ENCODE measurements at regions of chr14 and their contacts with region 1.

Region 1: GRCh38 chr14:91324606-91325575 is 80.4 kb upstream of the GPR68 start:
- DNase-seq: no peak
- H3K4me3 ChIP-seq: no peak overlapping the region
- CTCF ChIP-seq: no peak

Region 2: GRCh38 chr14:91286530-91286937 is 38.4 kb before region 1 on chr14:
- in situ Hi-C with region 1: no loop called
- DNase-seq: peak; percentile 71
- H3K4me3 ChIP-seq: no peak overlapping the region
- CTCF ChIP-seq: peak; percentile 84

Region 3: DNA sequence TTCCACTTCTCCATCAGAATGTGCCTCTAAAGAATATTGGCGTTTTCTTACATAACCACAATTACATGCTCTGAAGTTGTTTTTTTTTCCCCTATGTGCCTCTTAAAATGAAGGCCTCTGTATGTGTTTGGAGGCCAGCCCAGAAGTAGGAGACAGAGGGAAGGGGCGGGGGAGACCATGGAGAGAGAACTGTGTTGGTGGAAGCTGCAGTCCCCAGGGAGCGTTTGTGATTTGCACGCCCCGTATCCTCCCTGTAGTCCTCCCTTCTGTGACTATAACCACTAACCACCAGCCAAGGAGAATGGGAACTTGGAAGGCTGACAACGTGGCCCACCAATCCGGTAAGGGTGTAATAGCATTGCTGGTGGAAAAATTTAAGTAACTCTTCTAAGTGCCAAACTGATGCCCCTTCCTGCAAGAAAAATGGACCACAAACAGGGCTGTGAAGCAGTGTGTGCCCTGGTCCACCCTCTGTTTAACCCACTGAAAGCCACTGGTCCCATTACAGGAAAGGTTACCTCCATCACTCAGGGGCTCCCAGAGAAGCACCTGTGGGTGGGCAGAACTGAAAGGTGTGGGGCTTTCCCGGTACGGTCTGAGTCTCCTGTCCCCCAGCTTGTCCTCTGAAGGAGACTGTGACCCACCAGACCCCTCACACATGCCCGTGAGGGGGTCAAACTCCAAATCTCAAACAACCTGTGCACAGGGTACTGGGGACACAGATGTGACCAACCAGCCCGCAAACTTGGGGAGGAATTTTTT is 55.9 kb after region 1 on chr14:
- in situ Hi-C with region 1: no loop called
- DNase-seq: peak; percentile 72
- H3K4me3 ChIP-seq: no peak overlapping the region
- CTCF ChIP-seq: no peak

Region 4: DNA sequence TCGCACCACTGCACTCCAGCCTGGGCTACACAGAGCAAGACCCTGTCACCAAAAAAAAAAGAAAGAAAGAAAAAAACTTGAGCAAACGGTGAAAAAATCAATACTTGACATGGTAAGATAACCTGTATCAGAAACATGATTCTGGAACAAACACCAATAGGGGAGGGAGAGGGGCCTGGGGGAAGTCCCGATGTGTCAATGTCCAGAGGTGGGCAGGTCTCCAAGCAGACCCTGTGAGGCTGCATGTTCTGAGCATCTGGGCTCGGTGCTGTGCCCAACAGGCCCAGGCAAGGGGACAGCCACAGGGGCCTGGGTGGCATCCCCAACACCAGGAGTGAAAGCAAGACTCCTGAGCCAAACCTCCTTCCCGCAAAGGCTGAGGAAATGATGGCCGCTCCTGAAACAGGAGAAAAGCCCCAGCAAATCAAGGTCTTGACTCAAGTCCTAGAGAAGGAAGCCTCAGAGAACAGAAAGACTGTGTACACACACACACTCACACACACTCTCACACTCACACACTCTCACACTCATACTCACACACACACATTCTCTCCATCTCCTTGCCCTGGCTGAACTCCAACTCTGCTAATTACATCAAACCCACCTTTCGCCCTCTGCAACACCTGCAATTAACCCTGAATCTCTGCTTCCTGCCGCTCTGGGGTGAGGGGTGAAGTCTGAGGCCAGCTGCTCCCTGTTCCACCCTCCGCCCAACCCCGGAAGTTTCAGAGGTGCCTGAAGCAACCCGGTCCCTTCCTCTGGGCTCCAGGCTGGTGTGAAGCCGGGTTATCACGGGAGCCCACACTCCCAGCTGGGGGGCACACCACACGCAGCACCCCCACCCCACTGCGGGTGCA is 72.3 kb after region 1 on chr14:
- in situ Hi-C with region 1: loop called (anchors 5 kb)
- DNase-seq: no peak
- H3K4me3 ChIP-seq: no peak overlapping the region
- CTCF ChIP-seq: no peak

Region 5: DNA sequence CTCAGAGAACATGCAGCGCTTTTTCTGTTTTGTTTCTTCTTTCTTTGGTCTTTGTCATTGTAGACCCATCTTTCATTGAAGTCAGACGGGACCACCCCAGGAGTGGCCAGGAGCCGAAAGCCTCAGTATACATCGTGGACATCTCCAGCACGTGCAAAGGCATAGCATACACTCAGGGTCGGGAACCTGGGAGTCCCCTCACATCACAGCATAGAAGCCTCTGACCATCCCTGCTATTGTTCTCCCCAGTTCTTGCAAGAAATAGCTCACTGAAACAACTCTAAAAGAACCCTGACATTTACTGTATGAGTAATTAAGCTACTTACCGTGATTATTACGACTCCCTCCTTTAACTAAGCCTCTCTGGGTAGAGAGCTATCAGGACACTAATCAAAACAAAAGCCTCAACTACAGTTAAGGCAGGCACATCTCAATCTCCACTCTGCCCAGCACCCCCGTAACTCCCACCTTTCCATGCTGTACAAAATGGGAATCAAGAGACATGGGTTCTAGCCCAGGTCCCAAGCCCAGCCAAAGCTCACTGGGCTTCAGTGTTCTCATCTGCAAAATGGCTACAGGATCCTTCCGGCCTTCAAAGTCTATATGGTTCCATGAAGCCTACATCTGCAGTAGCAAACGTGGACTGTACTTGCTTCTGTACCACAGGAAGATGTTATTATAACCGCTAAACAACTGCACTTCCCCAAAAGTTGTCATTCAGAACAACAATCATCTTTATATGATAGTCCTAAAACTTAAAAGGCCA is 86.1 kb after region 1 on chr14:
- in situ Hi-C with region 1: no loop called
- DNase-seq: no peak
- H3K4me3 ChIP-seq: no peak overlapping the region
- CTCF ChIP-seq: no peak